ENCODE measurements at regions of chr13 and their contacts with region 1.

Region 1: DNA sequence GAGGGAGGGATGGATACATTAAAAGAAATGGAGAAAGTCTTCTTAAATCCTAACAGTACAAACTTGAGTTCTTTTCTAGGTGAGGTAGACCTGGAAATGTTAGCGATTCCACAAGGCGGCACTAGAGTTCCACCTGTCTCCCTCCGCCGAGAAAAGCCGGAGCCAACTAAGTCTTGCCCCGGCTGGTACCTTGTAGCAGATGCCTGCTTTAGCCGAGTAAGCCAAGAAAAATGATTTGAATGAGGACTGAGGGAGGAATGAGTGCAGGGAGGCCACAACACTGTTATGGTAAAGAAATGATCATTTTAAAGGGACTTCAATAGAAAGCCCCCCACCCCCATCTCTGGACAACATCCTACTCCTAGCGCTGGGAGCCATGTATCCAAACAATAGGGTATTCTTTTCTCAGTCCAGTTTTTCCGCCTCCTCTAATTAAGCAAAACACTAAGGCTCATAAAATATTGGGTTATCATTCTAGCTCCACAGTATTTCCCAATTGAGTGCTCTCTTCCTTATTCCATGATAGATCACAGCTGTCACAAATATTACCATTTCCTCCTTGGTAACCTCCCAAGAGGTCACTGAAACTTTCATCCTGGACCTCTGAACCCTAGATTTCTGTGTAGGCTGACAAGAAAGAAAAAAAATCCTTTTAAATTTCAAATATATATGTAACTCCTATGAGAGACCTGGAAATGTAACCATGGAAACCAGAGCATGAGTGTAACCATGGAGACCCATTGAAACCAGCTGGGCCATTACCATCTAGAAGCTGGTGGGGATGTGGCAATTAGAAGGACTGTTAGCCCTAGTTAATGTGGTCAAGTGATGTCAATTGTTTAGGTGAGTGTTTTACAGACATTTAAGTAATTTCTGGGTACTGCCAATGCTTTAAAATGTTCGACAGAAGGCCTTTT is 58.3 kb downstream of the GPALPP1 start:
- DNase-seq: peak; percentile 51
- ATAC-seq: peak; percentile 90
- H3K4me3 ChIP-seq: peak overlapping the region; percentile 63 to 72 (median 65); a peak in 5 of 6 replicates
- H3K27ac ChIP-seq: no peak overlapping the region
- H3K4me1 ChIP-seq: peaks cover 12% of the 10 kb centered on the region
- H3K27me3 ChIP-seq: no peaks in the 10 kb centered on the region; a peak in 1 of 5 replicates
- CTCF ChIP-seq: peak; percentile 91
- EP300 ChIP-seq: no peak
- POLR2A ChIP-seq: no peak
- RAD21 ChIP-seq: peak; percentile 88

Region 2: GRCh38 chr13:45119991-45120864 is 72.6 kb after region 1 on chr13 and contains the start of gene GTF2F2:
- CTCF ChIA-PET with region 1: interaction called, 7 read pairs
- POLR2A ChIA-PET with region 1: no interaction called
- in situ Hi-C with region 1: no loop called
- intact Hi-C with region 1: loop called (anchors 2 kb)
- DNase-seq: peak; percentile 76
- ATAC-seq: peak; percentile 89
- H3K4me3 ChIP-seq: peak within 1 kb of the TSS; percentile 66 to 78 (median 77)
- H3K27ac ChIP-seq: peak within 1 kb of the TSS; percentile 78
- H3K4me1 ChIP-seq: peaks cover 23% of the 10 kb centered on the region
- H3K27me3 ChIP-seq: no peaks in the 10 kb centered on the region; a peak in 1 of 5 replicates
- CTCF ChIP-seq: peak; percentile 49
- EP300 ChIP-seq: 0 out of 4 replicates have a peak, but pooled peaks of 1 of the 2 experiments have one; percentile 6
- POLR2A ChIP-seq: peak; percentile 71 to 86
- RAD21 ChIP-seq: peak; percentile 43; the same call in 1 of the 2 replicates
- total RNA-seq, gene GTF2F2: 32.8 and 48.3 TPM in 2 replicates

Region 3: GRCh38 chr13:45280751-45281634 is 233.3 kb after region 1 on chr13:
- CTCF ChIA-PET with region 1: interaction called, 50 read pairs
- POLR2A ChIA-PET with region 1: interaction called, 4 read pairs
- in situ Hi-C with region 1: loop called (anchors 5 kb)
- intact Hi-C with region 1: loop called (anchors 1 kb)
- DNase-seq: peak; percentile 47
- ATAC-seq: peak; percentile 99
- H3K4me3 ChIP-seq: no peak overlapping the region
- H3K27ac ChIP-seq: no peak overlapping the region
- H3K4me1 ChIP-seq: no peaks in the 10 kb centered on the region
- H3K27me3 ChIP-seq: no peaks in the 10 kb centered on the region
- CTCF ChIP-seq: peak; percentile 85
- EP300 ChIP-seq: no peak
- POLR2A ChIP-seq: no peak
- RAD21 ChIP-seq: peak; percentile 85

Region 4: DNA sequence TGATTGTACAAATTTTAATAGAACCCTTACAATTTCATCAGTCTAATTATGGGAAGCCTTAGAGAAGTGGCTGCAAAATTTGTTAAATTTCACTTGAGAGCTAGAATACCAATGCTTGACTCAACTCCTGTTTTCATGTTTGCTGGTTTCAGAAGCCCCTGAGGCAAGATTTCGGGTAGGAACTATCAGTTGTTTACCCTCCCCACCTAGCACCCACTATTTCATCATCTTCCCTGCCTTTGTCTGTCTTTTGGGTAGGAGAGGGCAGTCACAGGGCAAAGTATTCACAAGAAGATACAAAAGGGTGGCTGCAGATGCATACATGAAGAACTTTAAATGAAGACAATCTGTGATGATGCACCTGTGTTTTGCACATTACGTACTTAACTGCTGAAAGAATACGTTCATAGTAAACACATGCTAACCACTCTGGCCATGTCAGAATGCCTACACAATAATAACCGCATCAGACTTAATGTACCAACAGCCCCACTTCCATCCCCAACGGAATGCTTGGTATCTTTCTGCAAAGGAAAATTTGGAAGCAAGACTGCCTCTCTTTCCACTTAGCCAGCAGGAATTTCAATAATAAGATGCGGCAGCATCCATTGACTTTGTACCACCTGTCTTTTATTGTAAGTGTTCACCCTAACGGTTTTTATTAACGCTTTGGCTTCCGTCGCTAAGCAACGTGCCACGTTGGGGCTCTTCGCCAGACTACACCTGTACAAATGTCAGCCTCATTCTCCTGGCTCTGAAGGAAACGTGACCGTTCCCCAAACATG is 262.9 kb after region 1 on chr13:
- CTCF ChIA-PET with region 1: interaction called, 39 read pairs
- POLR2A ChIA-PET with region 1: no interaction called
- in situ Hi-C with region 1: loop called (anchors 5 kb)
- intact Hi-C with region 1: loop called (anchors 1 kb)
- DNase-seq: no peak
- ATAC-seq: peak; percentile 20
- H3K4me3 ChIP-seq: peak overlapping the region in 1 of 3 experiments; percentile 58; a peak in 2 of 6 replicates
- H3K27ac ChIP-seq: no peak overlapping the region
- H3K4me1 ChIP-seq: peaks cover 15% of the 10 kb centered on the region
- H3K27me3 ChIP-seq: no peaks in the 10 kb centered on the region; a peak in 2 of 5 replicates
- CTCF ChIP-seq: no peak
- EP300 ChIP-seq: no peak
- POLR2A ChIP-seq: no peak
- RAD21 ChIP-seq: no peak

Region 5: GRCh38 chr13:45393941-45394570 is 346.4 kb after region 1 on chr13:
- CTCF ChIA-PET with region 1: no interaction called
- POLR2A ChIA-PET with region 1: no interaction called
- in situ Hi-C with region 1: no loop called
- intact Hi-C with region 1: loop called (anchors 1 kb)
- DNase-seq: peak; percentile 61
- ATAC-seq: peak; percentile 90
- H3K4me3 ChIP-seq: no peak overlapping the region
- H3K27ac ChIP-seq: peak overlapping the region; percentile 20
- H3K4me1 ChIP-seq: peaks cover 5% of the 10 kb centered on the region; the same call in 1 of the 2 replicates
- H3K27me3 ChIP-seq: no peaks in the 10 kb centered on the region
- CTCF ChIP-seq: peak; percentile 66
- EP300 ChIP-seq: no peak
- POLR2A ChIP-seq: no peak
- RAD21 ChIP-seq: no peak

Region 6: DNA sequence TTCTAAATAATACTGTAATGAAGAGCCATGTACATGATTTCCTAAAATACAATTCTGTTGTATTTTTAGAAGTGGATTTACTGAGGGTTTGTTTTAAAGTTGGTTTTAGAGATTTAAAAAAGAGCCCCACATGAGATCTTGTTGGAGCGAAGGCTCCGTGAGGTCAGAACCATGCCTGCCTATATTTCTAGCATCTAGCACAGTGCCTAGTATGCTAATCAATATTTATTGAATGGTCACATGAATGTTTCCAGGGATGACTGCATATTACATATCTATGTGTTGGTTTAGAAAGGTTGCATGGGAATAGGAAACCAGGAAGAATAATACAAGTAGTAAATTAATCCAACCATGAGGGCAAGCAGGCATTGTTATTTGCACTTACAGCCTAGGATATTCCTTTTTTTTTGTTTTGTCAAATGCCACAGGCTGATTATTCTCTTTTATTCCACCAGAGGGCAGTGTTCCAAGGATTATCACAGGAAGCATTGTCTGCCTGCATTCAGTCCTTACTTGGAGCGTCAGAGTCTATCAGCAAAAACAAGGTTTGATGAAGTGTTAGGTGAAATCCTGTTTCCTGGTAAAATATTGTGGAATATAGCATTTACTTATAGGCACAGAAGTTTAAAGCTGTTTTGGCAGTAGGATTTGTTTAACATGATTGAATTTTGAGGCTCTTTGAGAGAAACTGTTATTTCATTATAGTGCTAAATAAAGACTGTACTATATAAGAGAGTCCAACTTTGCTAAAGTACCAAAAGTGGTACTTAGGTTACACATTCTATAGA is 463.9 kb after region 1 on chr13:
- CTCF ChIA-PET with region 1: no interaction called
- POLR2A ChIA-PET with region 1: no interaction called
- in situ Hi-C with region 1: loop called (anchors 25 kb)
- intact Hi-C with region 1: no loop called
- DNase-seq: peak; percentile 72
- ATAC-seq: peak; percentile 88
- H3K4me3 ChIP-seq: no peak overlapping the region
- H3K27ac ChIP-seq: no peak overlapping the region
- H3K4me1 ChIP-seq: no peaks in the 10 kb centered on the region
- H3K27me3 ChIP-seq: no peaks in the 10 kb centered on the region
- CTCF ChIP-seq: peak; percentile 75
- EP300 ChIP-seq: no peak
- POLR2A ChIP-seq: no peak
- RAD21 ChIP-seq: no peak